Sigmoid colon (tissue), 7 donors: ENCODE measurements at regions of chr2 and their contacts with region 1.

Region 1: DNA sequence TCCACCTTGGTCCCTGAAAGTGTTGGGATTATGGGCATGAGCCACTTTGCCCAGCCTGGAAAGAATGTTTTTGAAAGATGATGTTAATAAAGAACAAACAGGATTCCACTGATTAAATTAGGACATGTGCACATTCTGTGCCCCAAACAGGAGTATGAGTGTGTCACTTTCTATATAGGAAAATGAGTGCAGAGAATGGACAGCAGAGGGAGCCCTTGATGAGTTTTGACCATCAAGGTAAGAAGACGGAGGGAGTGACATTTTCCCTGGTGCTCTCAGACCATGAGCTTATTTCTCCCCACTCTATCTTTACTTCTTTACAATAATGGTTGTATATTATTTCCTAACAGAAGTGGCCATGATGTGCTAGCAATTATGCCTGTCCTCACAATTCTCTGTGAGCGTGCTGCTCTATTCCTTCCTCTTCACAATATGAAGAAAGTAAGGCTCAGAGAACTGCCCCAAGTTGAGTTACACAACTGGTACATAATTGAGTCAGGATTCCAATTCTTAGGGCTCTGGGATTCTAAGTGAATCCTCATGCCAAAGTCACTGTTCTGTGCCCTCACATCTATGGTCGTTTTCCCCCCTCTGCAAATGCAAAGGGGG is 20.6 kb downstream of the RPL37A start:
- DNase-seq: peak; percentile 76
- H3K4me3 ChIP-seq: no peak overlapping the region
- H3K27ac ChIP-seq: no peak overlapping the region
- H3K4me1 ChIP-seq: peaks cover 0 to 3% (median 0%) of the 10 kb centered on the region in 4 donors
- H3K27me3 ChIP-seq: no peaks in the 10 kb centered on the region
- CTCF ChIP-seq: peak; percentile 66 to 78 (median 75)
- EP300 ChIP-seq: no peak
- POLR2A ChIP-seq: no peak

Region 2: DNA sequence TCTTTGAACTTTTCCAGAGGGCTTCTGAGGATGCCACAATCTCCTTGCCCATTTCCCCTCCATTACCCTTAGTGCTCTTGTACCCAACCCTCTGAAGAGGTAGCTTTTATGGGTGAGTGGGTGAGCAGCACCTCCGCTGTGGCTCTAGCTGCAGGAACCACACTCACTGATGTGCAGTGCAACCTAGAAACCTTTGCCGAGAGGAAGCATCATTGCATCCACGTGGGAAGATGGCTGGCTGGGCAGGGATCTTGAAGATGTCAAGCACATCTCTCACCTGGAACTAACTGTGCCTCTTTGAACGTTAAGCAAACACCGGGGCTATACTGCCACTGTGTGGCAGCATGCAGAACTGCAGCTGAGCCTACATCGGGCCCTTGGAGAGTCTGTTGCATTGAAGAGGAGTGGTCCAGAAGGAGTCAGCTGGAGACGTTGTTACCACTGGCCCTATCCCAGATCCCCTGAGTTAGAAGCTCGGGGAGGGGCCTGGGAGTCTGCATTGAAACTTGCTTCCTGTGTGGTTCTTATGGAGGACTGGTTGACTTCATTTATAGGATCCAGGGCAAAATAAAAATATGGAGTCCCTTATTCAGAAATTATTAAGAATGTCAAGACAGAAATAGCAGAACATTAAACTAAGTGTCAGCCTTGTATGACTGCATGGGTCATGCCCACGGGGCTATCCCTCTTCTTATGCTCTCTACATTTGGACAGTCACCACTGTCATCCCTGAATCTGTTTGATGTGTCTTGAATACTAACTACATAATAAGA is 147.4 kb after region 1 on chr2:
- intact Hi-C with region 1: loop called (anchors 1 kb)
- DNase-seq: no peak
- H3K4me3 ChIP-seq: no peak overlapping the region
- H3K27ac ChIP-seq: peak overlapping the region in 1 of 4 donors; percentile 66
- H3K4me1 ChIP-seq: peaks cover 0 to 17% (median 15%) of the 10 kb centered on the region in 4 donors
- H3K27me3 ChIP-seq: no peaks in the 10 kb centered on the region
- CTCF ChIP-seq: peak; percentile 94 to 99 (median 98)
- EP300 ChIP-seq: no peak
- POLR2A ChIP-seq: no peak

Region 3: DNA sequence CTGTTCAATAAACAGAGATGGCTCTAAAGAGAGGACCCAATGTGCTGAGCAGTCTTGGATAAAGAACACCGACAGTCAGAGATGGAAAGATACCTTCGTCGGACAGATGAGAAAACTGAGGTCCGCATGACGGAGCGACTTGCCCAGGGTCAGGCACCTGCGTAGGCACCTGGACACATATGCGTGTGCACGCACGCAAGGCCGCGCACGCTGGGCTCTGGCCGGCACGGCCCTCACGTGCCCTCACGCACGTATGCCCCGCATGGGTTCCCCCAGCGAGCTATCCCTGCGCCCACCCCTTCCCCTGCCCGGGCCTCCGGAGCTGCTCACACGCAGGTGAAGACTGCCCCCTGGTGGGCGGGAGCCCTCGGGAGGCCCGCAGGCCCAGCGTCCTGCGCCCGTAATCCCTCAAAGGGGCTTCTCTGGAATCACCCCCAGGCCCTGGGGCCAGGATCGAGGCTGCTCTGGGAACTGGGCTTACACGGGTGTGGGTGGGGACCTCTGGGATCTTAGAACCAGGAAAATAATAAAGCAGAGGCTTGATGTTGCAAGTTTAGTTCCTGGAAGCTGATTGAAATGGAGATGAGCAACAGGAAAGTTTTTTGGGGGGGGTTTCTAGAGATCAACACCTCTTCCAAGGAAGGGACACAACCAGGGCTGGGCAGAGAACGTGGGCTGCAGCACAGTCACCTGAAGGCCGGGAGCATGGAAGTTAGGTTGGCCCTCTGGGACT is 1237.3 kb after region 1 on chr2:
- intact Hi-C with region 1: loop called (anchors 5 kb)
- DNase-seq: peak; percentile 87
- H3K4me3 ChIP-seq: peak overlapping the region in 1 of 4 donors; percentile 20
- H3K27ac ChIP-seq: peak overlapping the region in 3 of 4 donors; percentile 52 to 63 (median 61)
- H3K4me1 ChIP-seq: peaks cover 0 to 59% (median 48%) of the 10 kb centered on the region in 4 donors
- H3K27me3 ChIP-seq: no peaks in the 10 kb centered on the region
- CTCF ChIP-seq: peak; percentile 55 to 91 (median 80)
- EP300 ChIP-seq: peak in 1 of 4 donors; percentile 4
- POLR2A ChIP-seq: no peak